Left ventricle myocardium inferior (tissue), 1 donor: ENCODE measurements at regions of chr18 and their contacts with region 1.

Region 1: GRCh38 chr18:21191596-21192307 is 50.3 kb upstream of the GREB1L start:
- DNase-seq: peak; percentile 36
- H3K4me3 ChIP-seq: no peak overlapping the region
- H3K27ac ChIP-seq: no peak overlapping the region
- H3K4me1 ChIP-seq: no peaks in the 10 kb centered on the region
- H3K27me3 ChIP-seq: no peaks in the 10 kb centered on the region
- CTCF ChIP-seq: peak; percentile 65

Region 2: GRCh38 chr18:21444465-21445023 is 252.8 kb after region 1 on chr18:
- intact Hi-C with region 1: loop called (anchors 5 kb)
- DNase-seq: no peak
- H3K4me3 ChIP-seq: no peak overlapping the region
- H3K27ac ChIP-seq: no peak overlapping the region
- H3K4me1 ChIP-seq: peaks cover 5% of the 10 kb centered on the region
- H3K27me3 ChIP-seq: no peaks in the 10 kb centered on the region
- CTCF ChIP-seq: peak; percentile 72